Mammary epithelial cell (primary cell): ENCODE measurements at regions of chr22 and their contacts with region 1.

Region 1: DNA sequence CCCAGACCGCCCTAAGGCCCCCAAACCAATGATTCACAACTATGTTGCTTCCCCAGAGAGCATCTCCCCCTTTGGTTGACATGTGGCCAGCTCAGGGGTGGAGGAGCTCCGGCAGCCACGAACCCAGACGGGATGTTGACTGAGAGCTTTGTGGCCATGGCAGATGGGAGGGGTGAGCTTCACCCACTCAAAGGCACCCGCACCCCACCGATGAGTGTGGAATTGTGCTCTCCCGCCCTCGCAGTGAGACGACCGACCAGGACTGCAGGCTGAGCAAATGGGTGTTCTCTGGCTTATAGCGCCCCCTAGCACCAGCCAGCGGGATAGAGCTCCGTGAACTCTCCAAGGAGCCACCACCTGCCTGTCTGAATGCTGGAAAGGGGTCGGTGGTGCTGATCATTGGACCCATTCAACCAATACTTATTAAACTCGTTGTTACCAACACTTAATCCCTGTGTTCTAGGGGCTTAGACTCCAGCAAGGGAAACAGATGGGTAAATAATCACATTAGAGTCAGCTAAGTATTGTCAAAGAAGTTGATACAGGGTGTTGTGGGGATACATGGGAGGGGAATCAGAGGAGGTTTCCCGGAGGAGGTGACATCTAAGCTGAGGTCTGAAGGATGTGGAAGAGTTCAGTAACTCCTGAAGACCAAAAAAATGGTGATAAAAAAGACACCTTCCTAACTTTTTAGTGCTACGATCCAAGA is 4.5 kb upstream of the TIMP3 start:
- DNase-seq: peak; percentile 48
- H3K4me3 ChIP-seq: peak overlapping the region in 1 of 3 experiments; percentile 3
- H3K27ac ChIP-seq: no peak overlapping the region
- H3K4me1 ChIP-seq: peaks cover 11% of the 10 kb centered on the region
- H3K27me3 ChIP-seq: no peaks in the 10 kb centered on the region
- CTCF ChIP-seq: peak; percentile 96

Region 2: DNA sequence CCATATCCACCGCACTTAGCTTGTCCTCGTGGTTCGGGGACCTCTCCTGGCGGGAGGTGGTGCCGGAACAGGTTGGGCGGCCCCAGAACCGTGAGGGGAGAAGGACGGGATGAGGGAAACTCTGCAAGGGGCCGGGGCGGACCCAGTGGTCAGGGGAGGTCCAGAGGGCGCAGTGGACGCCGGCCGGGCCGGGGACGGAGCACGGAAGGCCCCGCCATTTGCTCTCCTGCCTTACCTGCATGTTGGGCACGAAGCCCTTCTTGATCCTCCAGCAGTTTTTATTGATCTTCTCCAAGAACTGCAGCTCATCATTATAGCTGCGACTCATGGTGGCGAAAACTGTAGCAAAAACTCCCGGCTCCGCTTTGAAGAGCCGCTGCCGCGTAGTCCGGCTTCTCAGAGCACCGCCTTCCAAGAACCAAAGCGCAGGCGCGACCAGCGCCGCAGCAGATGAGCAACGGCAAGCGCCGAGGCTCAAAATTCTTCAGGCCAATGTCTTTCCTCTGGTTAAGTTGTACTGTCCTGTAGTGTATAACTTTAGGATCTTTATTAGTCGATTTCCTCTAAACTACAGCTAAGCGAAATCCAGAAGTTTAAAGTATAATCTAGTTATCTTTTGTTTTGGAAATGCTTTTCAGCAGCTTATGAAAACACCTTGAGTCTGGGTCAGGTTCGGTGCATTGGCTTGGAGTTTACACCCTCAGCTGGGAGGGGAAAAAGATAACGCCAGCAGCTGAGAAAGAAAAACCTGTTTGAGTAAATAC is 385.0 kb before region 1 on chr22 and contains the start of gene RTCB:
- CTCF ChIA-PET with region 1: no interaction called
- dilution Hi-C with region 1: no loop called
- in situ Hi-C with region 1: no loop called
- intact Hi-C with region 1: loop called (anchors 10 kb)
- DNase-seq: peak; percentile 91
- H3K4me3 ChIP-seq: peak within 1 kb of the TSS; percentile 83 to 94 (median 86)
- H3K27ac ChIP-seq: peak within 1 kb of the TSS; percentile 80
- H3K4me1 ChIP-seq: peaks cover 25% of the 10 kb centered on the region
- H3K27me3 ChIP-seq: no peaks in the 10 kb centered on the region
- CTCF ChIP-seq: no peak
- total RNA-seq, gene RTCB: 75.8 to 84.7 TPM

Region 3: GRCh38 chr22:32628628-32629572 is 168.1 kb before region 1 on chr22:
- CTCF ChIA-PET with region 1: no interaction called
- dilution Hi-C with region 1: no loop called
- in situ Hi-C with region 1: no loop called
- intact Hi-C with region 1: loop called (anchors 1 kb)
- DNase-seq: no peak
- H3K4me3 ChIP-seq: no peak overlapping the region
- H3K27ac ChIP-seq: no peak overlapping the region
- H3K4me1 ChIP-seq: no peaks in the 10 kb centered on the region
- H3K27me3 ChIP-seq: no peaks in the 10 kb centered on the region
- CTCF ChIP-seq: no peak

Region 4: DNA sequence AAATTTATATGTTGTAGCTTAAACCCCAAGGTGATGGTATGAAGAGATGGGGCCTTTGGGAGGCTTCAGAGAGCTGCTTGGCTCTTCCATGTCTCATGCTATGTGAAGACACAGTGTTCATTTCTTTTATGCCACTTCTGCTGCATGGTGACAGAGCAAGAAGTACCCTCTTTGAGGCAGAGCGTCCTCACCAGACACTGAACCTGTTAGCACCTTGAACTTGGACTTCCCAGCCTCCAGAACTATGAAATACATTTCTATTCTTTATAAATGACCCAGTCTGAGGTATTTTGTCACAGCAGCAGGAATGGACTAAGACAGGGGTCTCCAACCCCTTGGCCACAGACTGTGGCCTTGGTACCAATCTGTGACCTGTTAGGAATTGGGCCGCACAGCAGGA is 142.0 kb before region 1 on chr22:
- CTCF ChIA-PET with region 1: interaction called, 46 read pairs
- dilution Hi-C with region 1: no loop called
- in situ Hi-C with region 1: loop called (anchors 5 kb)
- intact Hi-C with region 1: loop called (anchors 1 kb)
- DNase-seq: no peak
- H3K4me3 ChIP-seq: no peak overlapping the region
- H3K27ac ChIP-seq: no peak overlapping the region
- H3K4me1 ChIP-seq: no peaks in the 10 kb centered on the region
- H3K27me3 ChIP-seq: no peaks in the 10 kb centered on the region
- CTCF ChIP-seq: no peak

Region 5: GRCh38 chr22:32880893-32881596 is 84.0 kb after region 1 on chr22:
- CTCF ChIA-PET with region 1: no interaction called
- dilution Hi-C with region 1: no loop called
- in situ Hi-C with region 1: no loop called
- intact Hi-C with region 1: no loop called
- DNase-seq: no peak
- H3K4me3 ChIP-seq: no peak overlapping the region
- H3K27ac ChIP-seq: no peak overlapping the region
- H3K4me1 ChIP-seq: no peaks in the 10 kb centered on the region
- H3K27me3 ChIP-seq: peaks cover 3% of the 10 kb centered on the region
- CTCF ChIP-seq: no peak